ENCODE measurements at regions of chr20 and their contacts with region 1.

Region 1: GRCh38 chr20:50744143-50744792 is 12.9 kb downstream of the PARD6B start:
- DNase-seq: peak; percentile 53 to 77 (median 61)
- ATAC-seq: peak; percentile 87 to 94 (median 90)
- H3K4me3 ChIP-seq: no peak overlapping the region
- H3K27ac ChIP-seq: peak overlapping the region; percentile 55 to 89 (median 83)
- H3K4me1 ChIP-seq: peaks cover 0 to 45% (median 19%) of the 10 kb centered on the region in 12 donors
- H3K27me3 ChIP-seq: no peaks in the 10 kb centered on the region
- CTCF ChIP-seq: peak in 10 of 12 donors; percentile 18 to 60 (median 34)
- POLR2A ChIP-seq: no peak

Region 2: DNA sequence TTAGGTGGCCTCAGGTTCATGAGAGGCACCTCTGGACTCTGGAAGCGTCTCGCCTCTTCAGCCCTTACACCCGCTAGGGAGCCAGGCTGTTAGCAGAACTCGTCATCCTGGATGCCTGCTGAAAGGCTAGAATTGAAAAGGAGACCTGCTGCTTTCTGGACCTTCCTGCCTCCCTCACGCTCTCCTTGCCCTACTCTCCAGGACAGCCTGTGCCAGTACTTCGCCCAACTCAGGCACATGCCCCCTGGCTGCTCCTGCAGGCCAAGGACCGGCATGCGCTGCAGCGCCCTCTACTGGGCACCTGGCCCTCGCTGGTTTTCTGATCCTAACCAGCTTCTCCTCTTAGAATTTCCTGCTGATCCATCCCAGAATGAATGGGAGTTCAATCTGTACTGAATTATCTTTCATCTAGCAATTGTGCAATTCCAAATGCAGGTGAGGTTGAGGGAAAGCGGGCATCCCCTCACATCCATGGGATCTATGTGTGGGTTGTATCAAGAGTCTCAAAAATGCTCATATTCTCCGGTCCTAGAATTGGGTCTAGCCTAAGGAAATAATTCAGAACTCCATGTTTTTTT is 156.1 kb before region 1 on chr20:
- intact Hi-C with region 1: loop called in 1 of 10 experiments (anchors 10 kb)
- DNase-seq: peak; percentile 49 to 88 (median 73)
- ATAC-seq: peak in 3 of 4 donors; percentile 42 to 50 (median 42)
- H3K4me3 ChIP-seq: no peak overlapping the region
- H3K27ac ChIP-seq: peak overlapping the region in 1 of 12 donors; percentile 20
- H3K4me1 ChIP-seq: peaks cover 0 to 20% (median 13%) of the 10 kb centered on the region in 12 donors
- H3K27me3 ChIP-seq: no peaks in the 10 kb centered on the region
- CTCF ChIP-seq: peak; percentile 71 to 96 (median 86)
- POLR2A ChIP-seq: no peak

Region 3: DNA sequence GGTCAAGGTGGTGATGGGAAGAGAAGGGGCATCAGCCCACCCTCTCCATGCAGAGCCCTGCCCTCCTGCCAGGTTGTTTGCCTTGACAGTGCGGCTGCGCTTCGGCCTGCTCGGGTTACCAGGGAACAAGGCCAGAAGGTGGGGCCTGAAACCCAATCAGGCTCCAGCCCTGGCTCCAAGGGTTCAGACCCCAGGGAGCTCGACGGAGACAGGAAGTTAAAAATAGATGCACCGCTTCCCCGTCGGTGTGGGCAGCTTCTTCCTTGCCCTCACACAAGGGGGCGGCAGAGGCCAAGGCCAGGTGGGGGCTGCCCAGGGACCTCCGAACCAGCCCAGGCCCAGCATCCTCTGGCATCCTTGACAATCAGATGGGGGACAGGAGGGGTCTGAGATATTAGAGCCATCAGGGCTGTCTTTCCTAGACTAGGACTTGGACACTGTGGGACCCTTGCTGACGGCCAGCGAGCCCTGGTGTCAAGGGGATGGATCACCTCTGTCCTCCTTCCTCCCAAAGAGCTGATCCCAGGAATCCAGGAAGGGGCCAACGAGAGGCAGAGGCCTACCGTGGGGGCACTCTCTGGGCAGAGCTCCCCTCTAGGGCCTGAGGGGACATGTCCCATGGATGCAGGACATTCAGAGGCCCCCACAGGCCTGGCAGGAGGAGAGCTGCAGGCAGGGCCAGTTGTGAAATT is 118.1 kb before region 1 on chr20:
- intact Hi-C with region 1: loop called in 8 of 10 experiments (anchors 5 to 10 kb)
- DNase-seq: peak; percentile 61 to 83 (median 69)
- ATAC-seq: peak; percentile 47 to 80 (median 69)
- H3K4me3 ChIP-seq: no peak overlapping the region
- H3K27ac ChIP-seq: peak overlapping the region in 6 of 12 donors; percentile 2 to 50 (median 22)
- H3K4me1 ChIP-seq: peaks cover 0 to 22% (median 8%) of the 10 kb centered on the region in 12 donors
- H3K27me3 ChIP-seq: no peaks in the 10 kb centered on the region
- CTCF ChIP-seq: peak; percentile 29 to 69 (median 54)
- POLR2A ChIP-seq: no peak

Region 4: GRCh38 chr20:50635667-50636503 is 108.4 kb before region 1 on chr20:
- intact Hi-C with region 1: loop called in 1 of 10 experiments (anchors 10 kb)
- DNase-seq: peak; percentile 72 to 86 (median 79)
- ATAC-seq: peak; percentile 71 to 85 (median 74)
- H3K4me3 ChIP-seq: peak overlapping the region in 9 of 12 donors; percentile 10 to 44 (median 20)
- H3K27ac ChIP-seq: peak overlapping the region; percentile 15 to 77 (median 57)
- H3K4me1 ChIP-seq: peaks cover 0 to 30% (median 16%) of the 10 kb centered on the region in 12 donors
- H3K27me3 ChIP-seq: no peaks in the 10 kb centered on the region
- CTCF ChIP-seq: peak; percentile 76 to 94 (median 85)
- POLR2A ChIP-seq: peak in 1 of 2 donors; percentile 9

Region 5: GRCh38 chr20:50663095-50663850 is 81.0 kb before region 1 on chr20:
- intact Hi-C with region 1: loop called in 3 of 10 experiments (anchors 1 to 10 kb)
- DNase-seq: peak in 1 of 5 donors; percentile 35
- ATAC-seq: peak in 3 of 4 donors; percentile 30 to 50 (median 44)
- H3K4me3 ChIP-seq: no peak overlapping the region
- H3K27ac ChIP-seq: peak overlapping the region in 11 of 12 donors; percentile 59 to 87 (median 71)
- H3K4me1 ChIP-seq: peaks cover 5 to 55% (median 39%) of the 10 kb centered on the region in 12 donors
- H3K27me3 ChIP-seq: no peaks in the 10 kb centered on the region
- CTCF ChIP-seq: peak in 8 of 12 donors; percentile 7 to 39 (median 20)
- POLR2A ChIP-seq: no peak

Region 6: GRCh38 chr20:50713657-50714101 is 30.6 kb before region 1 on chr20:
- intact Hi-C with region 1: loop called in 1 of 10 experiments (anchors 2 kb)
- DNase-seq: peak in 1 of 5 donors; percentile 22
- ATAC-seq: peak in 3 of 4 donors; percentile 57 to 65 (median 64)
- H3K4me3 ChIP-seq: no peak overlapping the region
- H3K27ac ChIP-seq: no peak overlapping the region
- H3K4me1 ChIP-seq: peaks cover 0 to 7% (median 0%) of the 10 kb centered on the region in 12 donors
- H3K27me3 ChIP-seq: no peaks in the 10 kb centered on the region
- CTCF ChIP-seq: peak; percentile 20 to 61 (median 45)
- POLR2A ChIP-seq: no peak

Region 7: DNA sequence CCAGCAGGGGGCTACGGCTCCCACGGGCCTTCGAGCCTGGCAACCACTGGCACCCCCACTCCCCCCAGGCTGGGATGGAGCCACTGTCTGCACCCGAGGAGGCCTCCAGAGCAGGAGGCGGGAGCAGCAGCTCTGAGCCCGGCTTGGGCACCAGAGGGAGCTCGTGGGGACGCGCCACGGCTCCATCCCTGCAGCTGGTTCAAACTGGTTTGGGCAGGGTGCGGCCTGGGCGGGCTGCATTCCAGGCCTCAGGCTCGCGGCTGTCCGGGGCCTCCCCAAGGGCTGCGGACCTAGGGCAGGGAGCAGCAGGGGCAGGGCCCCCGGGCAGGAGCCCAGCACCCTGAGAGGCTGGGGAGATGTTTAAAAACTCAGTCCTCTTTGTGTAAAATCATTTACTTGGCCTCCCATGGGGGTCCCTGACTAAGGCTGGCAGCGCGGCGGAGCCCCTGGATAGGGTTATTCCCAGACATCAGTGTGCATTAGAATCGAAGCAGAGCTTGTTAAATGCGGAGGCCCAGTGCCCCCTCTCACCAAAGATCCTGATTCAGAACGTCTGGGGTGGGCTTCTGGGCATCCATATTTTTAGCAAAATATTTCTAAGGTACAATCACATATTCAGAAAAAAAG is 46.5 kb after region 1 on chr20:
- intact Hi-C with region 1: no loop called
- DNase-seq: peak; percentile 88 to 92 (median 91)
- ATAC-seq: peak; percentile 91 to 96 (median 92)
- H3K4me3 ChIP-seq: peak overlapping the region in 9 of 12 donors; percentile 3 to 44 (median 29)
- H3K27ac ChIP-seq: peak overlapping the region; percentile 53 to 89 (median 70)
- H3K4me1 ChIP-seq: peaks cover 0 to 41% (median 20%) of the 10 kb centered on the region in 12 donors
- H3K27me3 ChIP-seq: peaks cover 0 to 6% (median 0%) of the 10 kb centered on the region in 9 donors
- CTCF ChIP-seq: peak; percentile 54 to 91 (median 75)
- POLR2A ChIP-seq: no peak